ENCODE measurements at regions of chr4 and their contacts with region 1.

Region 1: DNA sequence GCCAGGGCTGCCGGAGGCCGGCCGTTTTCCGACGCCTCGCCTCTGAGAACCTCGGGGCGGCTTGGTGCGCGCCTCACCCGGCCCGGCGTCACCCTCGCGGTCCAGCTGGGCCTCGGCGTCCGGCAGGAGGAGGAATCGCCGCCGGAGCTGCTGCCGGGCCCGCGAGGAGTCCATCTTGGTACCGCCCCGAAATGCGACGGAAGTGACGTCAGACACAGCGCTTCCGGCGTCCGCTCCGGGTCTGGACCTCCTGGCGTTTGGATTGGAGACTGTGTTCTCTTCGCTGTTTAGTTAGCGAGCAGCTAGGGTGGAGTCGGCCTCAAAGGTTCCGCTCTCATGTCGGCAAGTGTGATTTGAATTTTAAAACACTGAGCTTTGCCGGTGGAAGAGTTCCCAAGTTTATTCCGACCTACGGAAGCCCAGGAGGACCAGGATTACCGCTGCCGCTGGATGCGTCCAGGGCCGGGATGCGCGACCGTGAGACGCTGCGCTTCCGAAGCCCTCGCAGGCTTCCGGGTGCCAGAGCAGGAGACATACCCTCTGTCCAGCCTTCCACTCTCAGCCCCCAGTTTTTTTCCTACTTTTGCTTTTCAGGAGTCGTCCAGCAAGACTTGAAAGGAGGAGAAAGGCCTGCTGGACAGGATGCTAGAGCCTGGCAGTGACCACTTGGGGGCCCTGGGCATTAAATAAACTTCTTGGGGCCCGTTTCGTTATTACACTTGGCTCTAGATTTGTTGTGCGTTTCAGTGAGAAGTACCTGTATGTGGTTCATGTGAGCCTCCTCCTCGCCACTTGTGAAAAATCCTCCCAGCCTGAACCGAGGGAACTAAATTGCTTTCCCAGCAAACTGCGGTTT is at the start of gene TMEM128:
- DNase-seq: peak; percentile 95
- ATAC-seq: peak; percentile 98
- H3K4me3 Mint-ChIP-seq: peak within 1 kb of the TSS; percentile 98
- H3K27ac Mint-ChIP-seq: peak within 1 kb of the TSS; percentile 98
- H3K4me1 Mint-ChIP-seq: peaks cover 26% of the 10 kb centered on the region
- H3K27me3 Mint-ChIP-seq: no peaks in the 10 kb centered on the region
- total RNA-seq, gene TMEM128: 14.6 to 25.3 TPM

Region 2: DNA sequence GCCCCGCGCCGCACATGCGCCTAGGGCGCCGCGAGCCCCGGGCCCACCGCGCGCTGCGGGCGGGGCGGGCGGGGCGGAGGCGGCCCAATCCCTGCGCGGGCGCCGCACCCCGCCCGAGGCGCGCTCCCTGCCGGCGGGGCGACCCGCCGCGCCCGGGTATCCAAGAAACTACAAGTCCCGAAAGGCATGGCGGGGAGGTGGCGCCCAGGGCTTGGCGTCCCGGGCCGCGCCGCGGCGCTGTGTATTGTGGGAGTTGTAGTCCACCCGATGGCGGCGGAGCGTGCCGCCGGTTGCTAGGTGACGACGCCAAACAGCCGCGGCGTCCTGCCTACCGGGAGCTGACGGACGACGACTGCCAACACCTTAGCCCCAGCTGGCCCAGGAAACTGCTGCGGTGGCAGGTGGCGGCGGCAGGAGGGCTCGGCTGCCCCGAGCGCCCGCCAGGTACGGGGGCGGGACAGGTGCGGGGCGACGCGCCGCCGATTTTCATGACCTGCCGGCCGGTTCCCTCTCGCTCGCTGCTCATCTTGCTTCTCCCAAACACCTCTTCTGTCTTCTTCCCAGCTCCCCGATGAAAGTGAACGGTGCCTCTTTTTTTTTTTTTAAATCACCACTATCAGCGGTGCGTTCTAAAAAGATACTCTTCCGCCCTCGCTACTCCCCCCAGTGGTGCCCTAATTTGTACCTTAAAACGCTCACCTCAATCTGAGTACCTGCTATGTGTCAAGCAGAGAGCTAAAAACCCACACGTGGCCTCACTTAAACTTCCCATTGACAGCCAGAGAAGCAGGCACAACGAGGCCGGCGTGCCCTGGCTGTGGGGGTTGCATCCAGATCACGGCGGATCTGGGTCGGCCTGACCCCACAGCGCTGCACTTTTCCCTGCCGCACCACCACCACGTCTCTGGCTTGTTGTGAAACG is 1829.3 kb before region 1 on chr4 and contains the start of gene CFAP99:
- CTCF ChIA-PET with region 1: no interaction called
- POLR2A ChIA-PET with region 1: no interaction called
- intact Hi-C with region 1: loop called in 1 of 2 experiments (anchors 5 kb)
- DNase-seq: peak; percentile 99
- ATAC-seq: peak; percentile 93
- H3K4me3 Mint-ChIP-seq: peak within 1 kb of the TSS; percentile 82
- H3K27ac Mint-ChIP-seq: peak within 1 kb of the TSS; percentile 68
- H3K4me1 Mint-ChIP-seq: peaks cover 39% of the 10 kb centered on the region
- H3K27me3 Mint-ChIP-seq: peaks cover 27% of the 10 kb centered on the region
- total RNA-seq, gene CFAP99: 0.05 TPM in 1 of 2 experiments, not detected in the other

Region 3: GRCh38 chr4:4289941-4290850 is 41.9 kb after region 1 on chr4 and contains the starts of genes LYAR and ZBTB49:
- CTCF ChIA-PET with region 1: interaction called, 4 read pairs
- POLR2A ChIA-PET with region 1: no interaction called
- intact Hi-C with region 1: loop called (anchors 1 kb)
- DNase-seq: peak; percentile 98
- ATAC-seq: peak; percentile 95
- H3K4me3 Mint-ChIP-seq: peak within 1 kb of the TSS; percentile 93
- H3K27ac Mint-ChIP-seq: peak within 1 kb of the TSS; percentile 77
- H3K4me1 Mint-ChIP-seq: peaks cover 35% of the 10 kb centered on the region
- H3K27me3 Mint-ChIP-seq: no peaks in the 10 kb centered on the region
- total RNA-seq, gene LYAR: 65.6 to 74.3 TPM
- total RNA-seq, gene ZBTB49: 3.3 to 3.8 TPM

Region 4: GRCh38 chr4:4430492-4431197 is 182.4 kb after region 1 on chr4:
- CTCF ChIA-PET with region 1: interaction called, 3 read pairs
- POLR2A ChIA-PET with region 1: no interaction called
- intact Hi-C with region 1: loop called (anchors 2 to 10 kb)
- DNase-seq: peak; percentile 80
- ATAC-seq: peak; percentile 96
- H3K4me3 Mint-ChIP-seq: no peak overlapping the region
- H3K27ac Mint-ChIP-seq: no peak overlapping the region
- H3K4me1 Mint-ChIP-seq: peaks cover 5% of the 10 kb centered on the region
- H3K27me3 Mint-ChIP-seq: no peaks in the 10 kb centered on the region

Region 5: DNA sequence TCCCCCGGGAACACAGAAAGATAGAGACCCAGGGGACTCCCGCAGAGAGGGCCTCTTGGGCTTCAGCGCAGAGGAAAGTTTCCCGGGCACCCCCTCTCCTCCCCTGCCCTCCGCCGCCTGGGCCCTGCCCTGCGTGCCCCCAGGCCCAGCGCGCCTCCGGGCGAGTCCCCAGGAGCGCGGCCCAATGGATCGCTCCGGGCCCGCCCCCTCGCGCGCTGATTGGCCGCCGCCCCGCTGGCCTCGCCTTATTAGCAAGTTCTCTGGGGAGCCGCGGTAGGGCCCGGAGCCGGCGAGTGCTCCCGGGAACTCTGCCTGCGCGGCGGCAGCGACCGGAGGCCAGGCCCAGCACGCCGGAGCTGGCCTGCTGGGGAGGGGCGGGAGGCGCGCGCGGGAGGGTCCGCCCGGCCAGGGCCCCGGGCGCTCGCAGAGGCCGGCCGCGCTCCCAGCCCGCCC is 611.2 kb after region 1 on chr4 and contains the start of gene MSX1:
- CTCF ChIA-PET with region 1: no interaction called
- POLR2A ChIA-PET with region 1: no interaction called
- intact Hi-C with region 1: loop called in 1 of 2 experiments (anchors 1 kb)
- DNase-seq: peak; percentile 76
- ATAC-seq: peak; percentile 86
- H3K4me3 Mint-ChIP-seq: peak within 1 kb of the TSS; percentile 38
- H3K27ac Mint-ChIP-seq: no peak within 1 kb of the TSS
- H3K4me1 Mint-ChIP-seq: peaks cover 40% of the 10 kb centered on the region
- H3K27me3 Mint-ChIP-seq: peaks cover 64% of the 10 kb centered on the region
- total RNA-seq, gene MSX1: 0.09 TPM in 1 of 2 experiments, not detected in the other